CD8-positive, alpha-beta T cell (primary cell): ENCODE measurements at regions of chr2 and their contacts with region 1.

Region 1: GRCh38 chr2:177263451-177264208 is 897 bp downstream of the NFE2L2 start:
- DNase-seq: peak; percentile 90 to 98 (median 96)
- ATAC-seq: peak; percentile 61
- H3K4me3 ChIP-seq: peak overlapping the region; percentile 86 to 97
- H3K4me3 Mint-ChIP-seq: peak overlapping the region; percentile 92
- H3K27ac ChIP-seq: peak overlapping the region; percentile 98 to 99
- H3K27ac Mint-ChIP-seq: peak overlapping the region; percentile 99
- H3K4me1 ChIP-seq: peaks cover 43% of the 10 kb centered on the region
- H3K4me1 Mint-ChIP-seq: peaks cover 49% of the 10 kb centered on the region
- H3K27me3 ChIP-seq: no peaks in the 10 kb centered on the region
- H3K27me3 Mint-ChIP-seq: no peaks in the 10 kb centered on the region
- CTCF ChIP-seq: peak; percentile 82

Region 2: GRCh38 chr2:177212106-177212890 is 51.3 kb before region 1 on chr2 and contains the start of gene HNRNPA3:
- CTCF ChIA-PET with region 1: interaction called, 15 read pairs
- POLR2A ChIA-PET with region 1: interaction called, 129 read pairs
- intact Hi-C with region 1: loop called (anchors 1 kb)
- DNase-seq: peak; percentile 99 to 100 (median 100)
- ATAC-seq: peak; percentile 86
- H3K4me3 ChIP-seq: peak within 1 kb of the TSS; percentile 69 to 83
- H3K4me3 Mint-ChIP-seq: peak within 1 kb of the TSS; percentile 88
- H3K27ac ChIP-seq: peak within 1 kb of the TSS; percentile 99 to 100
- H3K27ac Mint-ChIP-seq: peak within 1 kb of the TSS; percentile 100
- H3K4me1 ChIP-seq: peaks cover 50% of the 10 kb centered on the region
- H3K4me1 Mint-ChIP-seq: peaks cover 51% of the 10 kb centered on the region
- H3K27me3 ChIP-seq: no peaks in the 10 kb centered on the region
- H3K27me3 Mint-ChIP-seq: no peaks in the 10 kb centered on the region
- CTCF ChIP-seq: no peak
- total RNA-seq, gene HNRNPA3: 144 to 160 TPM

Region 3: DNA sequence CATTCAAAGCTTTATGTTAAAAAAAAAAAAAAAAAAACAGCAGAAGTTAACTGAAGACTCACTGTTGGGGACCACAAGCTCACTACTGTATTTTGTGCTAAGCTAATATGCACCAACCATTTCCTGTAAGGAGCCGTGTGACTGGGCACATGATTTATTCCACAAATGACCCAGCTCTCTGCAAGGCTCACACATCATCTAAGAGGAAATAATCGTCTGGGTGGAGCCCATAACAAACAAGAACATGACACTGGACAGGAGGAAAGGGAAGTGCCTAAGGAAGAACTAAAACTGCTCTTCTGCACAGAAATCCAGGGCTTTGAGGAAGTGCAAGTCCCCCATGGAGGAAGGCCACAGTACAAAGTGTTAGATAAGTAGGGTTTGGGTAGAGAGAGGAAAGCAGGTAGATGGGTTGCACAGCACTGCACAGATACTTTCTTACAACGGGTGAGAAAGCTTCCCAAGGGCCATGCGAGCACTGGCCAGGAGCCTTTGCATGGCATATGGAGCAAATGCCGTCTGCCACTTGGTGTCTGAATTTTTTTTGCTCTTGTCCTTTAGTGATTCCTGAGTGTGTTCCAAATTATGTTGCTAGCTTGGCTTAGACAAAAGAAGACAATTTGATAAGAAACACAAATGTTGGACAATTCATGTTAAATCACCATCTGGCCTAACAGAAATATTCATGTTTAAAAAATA is 23.5 kb before region 1 on chr2:
- CTCF ChIA-PET with region 1: interaction called, 35 read pairs
- POLR2A ChIA-PET with region 1: interaction called, 87 read pairs
- intact Hi-C with region 1: loop called (anchors 2 kb)
- DNase-seq: peak in 4 of 9 experiments; percentile 27 to 82 (median 58)
- ATAC-seq: peak; percentile 78
- H3K4me3 ChIP-seq: no peak overlapping the region
- H3K4me3 Mint-ChIP-seq: peak overlapping the region; percentile 59
- H3K27ac ChIP-seq: peak overlapping the region; percentile 36 to 80
- H3K27ac Mint-ChIP-seq: peak overlapping the region; percentile 89
- H3K4me1 ChIP-seq: peaks cover 60% of the 10 kb centered on the region
- H3K4me1 Mint-ChIP-seq: peaks cover 84% of the 10 kb centered on the region
- H3K27me3 ChIP-seq: no peaks in the 10 kb centered on the region
- H3K27me3 Mint-ChIP-seq: no peaks in the 10 kb centered on the region
- CTCF ChIP-seq: no peak

Region 4: GRCh38 chr2:177289824-177290628 is 26.4 kb after region 1 on chr2:
- CTCF ChIA-PET with region 1: interaction called, 40 read pairs
- POLR2A ChIA-PET with region 1: interaction called, 15 read pairs
- intact Hi-C with region 1: no loop called
- DNase-seq: peak in 1 of 9 experiments; percentile 51
- ATAC-seq: peak; percentile 52
- H3K4me3 ChIP-seq: peak overlapping the region; percentile 11 to 19
- H3K4me3 Mint-ChIP-seq: peak overlapping the region; percentile 62
- H3K27ac ChIP-seq: peak overlapping the region; percentile 38 to 60
- H3K27ac Mint-ChIP-seq: peak overlapping the region; percentile 83
- H3K4me1 ChIP-seq: peaks cover 18% of the 10 kb centered on the region
- H3K4me1 Mint-ChIP-seq: peaks cover 17% of the 10 kb centered on the region
- H3K27me3 ChIP-seq: no peaks in the 10 kb centered on the region
- H3K27me3 Mint-ChIP-seq: no peaks in the 10 kb centered on the region
- CTCF ChIP-seq: no peak

Region 5: GRCh38 chr2:177332041-177332991 is 68.7 kb after region 1 on chr2:
- CTCF ChIA-PET with region 1: interaction called, 45 read pairs
- POLR2A ChIA-PET with region 1: interaction called, 31 read pairs
- intact Hi-C with region 1: loop called (anchors 1 kb)
- DNase-seq: peak in 8 of 9 experiments; percentile 6 to 79 (median 33)
- ATAC-seq: peak; percentile 87
- H3K4me3 ChIP-seq: no peak overlapping the region
- H3K4me3 Mint-ChIP-seq: no peak overlapping the region
- H3K27ac ChIP-seq: no peak overlapping the region
- H3K27ac Mint-ChIP-seq: no peak overlapping the region
- H3K4me1 ChIP-seq: peaks cover 6% of the 10 kb centered on the region
- H3K4me1 Mint-ChIP-seq: peaks cover 10% of the 10 kb centered on the region
- H3K27me3 ChIP-seq: no peaks in the 10 kb centered on the region
- H3K27me3 Mint-ChIP-seq: no peaks in the 10 kb centered on the region
- CTCF ChIP-seq: peak; percentile 73

Region 6: DNA sequence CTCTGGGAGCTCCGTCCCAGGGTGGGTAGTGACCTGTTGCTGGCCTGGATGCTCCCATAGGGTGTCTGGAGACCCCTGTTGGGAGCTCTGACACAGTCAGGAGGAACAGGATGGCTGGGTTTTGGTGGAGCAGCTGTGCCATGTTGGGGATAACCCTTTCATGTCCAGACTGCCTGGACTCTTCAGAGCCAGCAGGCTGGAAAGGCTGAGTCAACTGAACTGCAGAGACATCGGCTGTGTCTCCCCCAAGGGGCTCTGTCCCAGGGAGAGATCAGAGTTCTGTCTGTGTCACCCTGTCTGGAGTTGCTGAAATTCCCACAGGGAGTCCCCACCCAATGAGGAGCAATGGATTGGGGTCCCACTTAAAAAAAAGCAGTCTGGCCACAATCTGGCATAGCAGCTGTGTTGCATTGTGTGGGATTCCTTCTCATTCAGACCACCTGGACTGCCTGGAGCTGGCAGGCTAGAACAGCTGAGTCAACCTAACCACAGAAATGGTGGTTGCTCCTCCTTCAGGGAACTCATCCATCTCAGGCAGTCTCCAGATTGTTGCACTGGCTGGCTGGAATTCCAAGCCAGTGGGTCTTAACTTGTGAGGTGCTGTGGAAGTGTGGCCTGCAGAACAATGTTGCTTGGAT is 166.2 kb after region 1 on chr2:
- CTCF ChIA-PET with region 1: no interaction called
- POLR2A ChIA-PET with region 1: no interaction called
- intact Hi-C with region 1: no loop called
- DNase-seq: no peak
- ATAC-seq: no peak
- H3K4me3 ChIP-seq: no peak overlapping the region
- H3K4me3 Mint-ChIP-seq: no peak overlapping the region
- H3K27ac ChIP-seq: no peak overlapping the region
- H3K27ac Mint-ChIP-seq: no peak overlapping the region
- H3K4me1 ChIP-seq: no peaks in the 10 kb centered on the region
- H3K4me1 Mint-ChIP-seq: peaks cover 15% of the 10 kb centered on the region
- H3K27me3 ChIP-seq: no peaks in the 10 kb centered on the region
- H3K27me3 Mint-ChIP-seq: no peaks in the 10 kb centered on the region
- CTCF ChIP-seq: no peak

Region 7: DNA sequence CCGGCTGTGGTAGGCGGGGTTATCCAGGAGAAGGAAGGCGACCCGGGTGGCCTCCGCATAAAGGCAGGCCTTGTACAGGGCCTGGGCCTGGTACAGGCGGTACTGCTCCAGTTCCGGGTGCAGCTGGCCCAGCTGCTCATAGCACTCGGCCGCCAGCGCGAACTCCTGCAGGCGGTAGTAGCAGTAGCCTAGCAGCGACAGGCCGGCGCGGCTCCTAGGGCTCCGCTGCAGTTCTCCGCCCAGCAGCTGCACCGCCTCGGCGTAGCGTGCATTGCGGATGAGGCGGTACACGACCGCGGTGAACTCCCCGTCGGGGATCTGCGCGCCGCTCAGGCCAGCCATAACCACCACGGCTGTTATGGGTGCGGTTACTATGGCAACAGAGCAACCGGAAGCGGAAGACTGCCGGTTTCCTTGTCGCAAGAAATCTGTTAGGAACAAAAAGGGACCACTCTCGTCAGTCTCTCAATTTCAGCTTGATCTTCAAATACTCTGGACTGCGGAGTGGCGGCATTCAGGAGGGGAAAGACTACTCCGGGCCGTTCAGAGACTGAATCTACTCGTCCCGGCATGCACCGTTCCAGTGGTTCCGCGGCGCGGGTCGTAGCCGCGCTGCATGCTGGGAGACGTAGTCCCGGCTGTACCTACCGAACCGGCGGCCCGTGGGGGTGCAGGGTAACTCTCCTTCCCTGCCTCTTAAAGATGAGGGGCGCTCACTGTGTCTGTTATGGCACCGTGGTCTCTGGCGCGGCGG is 289.0 kb after region 1 on chr2:
- CTCF ChIA-PET with region 1: no interaction called
- POLR2A ChIA-PET with region 1: interaction called, 5 read pairs
- intact Hi-C with region 1: loop called in 1 of 2 experiments (anchors 2 kb)
- DNase-seq: peak; percentile 83 to 97 (median 91)
- ATAC-seq: peak; percentile 89
- H3K4me3 ChIP-seq: peak overlapping the region; percentile 85 to 99
- H3K4me3 Mint-ChIP-seq: peak overlapping the region; percentile 96
- H3K27ac ChIP-seq: peak overlapping the region; percentile 98 to 100
- H3K27ac Mint-ChIP-seq: peak overlapping the region; percentile 99
- H3K4me1 ChIP-seq: peaks cover 6% of the 10 kb centered on the region
- H3K4me1 Mint-ChIP-seq: peaks cover 12% of the 10 kb centered on the region
- H3K27me3 ChIP-seq: peaks cover 0 to 2% of the 10 kb centered on the region in 2 experiments
- H3K27me3 Mint-ChIP-seq: no peaks in the 10 kb centered on the region
- CTCF ChIP-seq: no peak